HEK293 (cell line): ENCODE measurements at regions of chr12 and their contacts with region 1.

Region 1: GRCh38 chr12:49707128-49707811 is at the start of gene FMNL3:
- H3K4me3 ChIP-seq: peak within 1 kb of the TSS; percentile 65
- H3K27ac ChIP-seq: peak within 1 kb of the TSS; percentile 89
- H3K4me1 ChIP-seq: peaks cover 5% of the 10 kb centered on the region
- CTCF ChIP-seq: peak; percentile 96

Region 2: GRCh38 chr12:49347384-49348237 is 359.7 kb before region 1 on chr12:
- CTCF ChIA-PET with region 1: no interaction called
- POLR2A ChIA-PET with region 1: no interaction called
- H3K4me3 ChIP-seq: peak overlapping the region; percentile 32
- H3K27ac ChIP-seq: peak overlapping the region; percentile 80; the same call in 1 of the 2 replicates
- H3K4me1 ChIP-seq: peaks cover 21% of the 10 kb centered on the region
- CTCF ChIP-seq: peak; percentile 97

Region 3: DNA sequence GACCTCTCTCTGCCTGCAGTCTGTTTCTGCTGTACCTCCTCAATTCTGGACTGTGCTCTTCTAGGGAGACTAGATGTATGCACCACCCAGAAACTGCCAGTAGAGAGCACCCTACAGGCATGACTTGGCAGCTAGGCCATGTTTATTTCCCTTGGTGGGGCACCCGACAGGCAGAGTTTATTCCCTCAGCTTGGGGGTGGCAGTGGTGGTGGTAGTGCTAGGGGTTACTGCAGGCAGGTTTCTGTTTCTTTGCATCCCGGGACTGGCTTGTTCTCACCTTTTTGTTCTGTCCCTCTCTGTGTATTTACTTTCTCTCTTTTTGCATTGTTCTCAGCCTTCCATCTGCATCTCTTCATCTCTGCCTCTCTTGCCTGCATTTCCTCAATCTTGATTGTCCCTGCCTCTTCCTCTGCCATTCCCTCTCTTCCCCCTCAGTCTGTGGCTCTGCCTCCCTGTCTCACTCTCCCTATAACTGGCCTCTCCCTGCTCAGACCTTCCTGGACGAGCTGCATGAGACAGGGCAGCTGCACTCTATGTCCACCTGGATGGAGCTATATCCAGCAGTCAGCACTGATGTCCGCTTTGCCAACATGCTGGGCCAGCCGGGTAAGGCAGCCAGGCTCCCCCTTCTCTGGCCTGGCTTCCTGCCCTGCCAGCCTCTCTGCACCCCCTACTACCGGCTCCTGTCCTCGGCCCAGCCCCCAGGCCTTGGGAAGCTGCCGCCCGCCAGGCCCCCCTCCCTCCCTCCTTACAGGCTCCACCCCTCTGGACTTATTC is 70.1 kb before region 1 on chr12:
- CTCF ChIA-PET with region 1: interaction called, 30 read pairs
- POLR2A ChIA-PET with region 1: no interaction called
- H3K4me3 ChIP-seq: no peak overlapping the region
- H3K27ac ChIP-seq: no peak overlapping the region
- H3K4me1 ChIP-seq: no peaks in the 10 kb centered on the region; the same call in 1 of the 2 replicates
- CTCF ChIP-seq: peak; percentile 79

Region 4: DNA sequence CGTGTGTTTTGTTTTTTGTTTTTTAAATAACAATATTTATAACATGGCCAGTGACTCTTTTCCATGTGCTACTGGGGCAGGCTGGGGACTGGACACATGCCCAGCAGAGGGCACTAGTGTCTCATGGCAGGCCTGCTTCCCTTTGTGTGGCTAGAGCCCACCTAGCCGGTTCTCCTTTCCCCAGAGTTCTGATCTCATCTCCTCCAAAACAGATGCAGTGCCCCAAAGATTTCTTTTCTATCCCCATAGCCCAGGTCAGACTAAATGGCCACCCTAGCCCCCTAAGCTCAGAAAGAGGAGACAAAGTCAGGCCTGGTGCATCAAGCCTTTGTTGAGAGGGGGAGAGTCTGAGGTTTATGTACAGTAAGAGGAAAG is 62.7 kb before region 1 on chr12:
- CTCF ChIA-PET with region 1: interaction called, 72 read pairs
- POLR2A ChIA-PET with region 1: interaction called, 5 read pairs
- H3K4me3 ChIP-seq: no peak overlapping the region
- H3K27ac ChIP-seq: no peak overlapping the region
- H3K4me1 ChIP-seq: no peaks in the 10 kb centered on the region
- CTCF ChIP-seq: peak; percentile 84

Region 5: DNA sequence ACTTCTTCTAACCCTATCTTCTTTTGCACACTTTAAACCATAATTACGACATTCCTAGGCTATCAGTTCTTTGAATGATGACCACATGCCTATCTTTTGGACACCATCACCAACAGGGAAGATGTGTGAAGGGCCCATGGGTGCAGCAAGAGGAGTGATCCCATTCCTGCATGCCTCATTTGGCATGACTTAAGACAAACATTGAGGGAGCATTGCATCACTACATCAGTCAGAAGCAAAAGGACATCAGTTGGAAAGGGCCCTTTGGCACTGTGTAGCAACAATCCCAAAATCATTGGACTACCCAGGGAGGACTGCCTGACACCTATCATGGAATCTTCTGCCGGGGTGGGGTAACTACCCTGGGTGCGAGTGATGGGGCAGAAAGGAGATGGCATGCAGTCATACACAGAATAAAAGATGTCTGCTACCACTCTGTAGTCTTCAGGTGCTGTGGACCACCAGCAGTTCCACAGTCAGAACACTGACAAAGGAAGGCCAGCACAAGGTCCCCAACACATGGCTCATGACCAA is 23.4 kb after region 1 on chr12:
- CTCF ChIA-PET with region 1: no interaction called
- POLR2A ChIA-PET with region 1: no interaction called
- H3K4me3 ChIP-seq: no peak overlapping the region
- H3K27ac ChIP-seq: no peak overlapping the region
- H3K4me1 ChIP-seq: no peaks in the 10 kb centered on the region
- CTCF ChIP-seq: no peak

Region 6: GRCh38 chr12:49855005-49855404 is 147.7 kb after region 1 on chr12:
- CTCF ChIA-PET with region 1: no interaction called
- POLR2A ChIA-PET with region 1: no interaction called
- H3K4me3 ChIP-seq: no peak overlapping the region
- H3K27ac ChIP-seq: no peak overlapping the region
- H3K4me1 ChIP-seq: no peaks in the 10 kb centered on the region
- CTCF ChIP-seq: no peak